Stomach (tissue), 19 donors: ENCODE measurements at regions of chr7 and their contacts with region 1.

Region 1: DNA sequence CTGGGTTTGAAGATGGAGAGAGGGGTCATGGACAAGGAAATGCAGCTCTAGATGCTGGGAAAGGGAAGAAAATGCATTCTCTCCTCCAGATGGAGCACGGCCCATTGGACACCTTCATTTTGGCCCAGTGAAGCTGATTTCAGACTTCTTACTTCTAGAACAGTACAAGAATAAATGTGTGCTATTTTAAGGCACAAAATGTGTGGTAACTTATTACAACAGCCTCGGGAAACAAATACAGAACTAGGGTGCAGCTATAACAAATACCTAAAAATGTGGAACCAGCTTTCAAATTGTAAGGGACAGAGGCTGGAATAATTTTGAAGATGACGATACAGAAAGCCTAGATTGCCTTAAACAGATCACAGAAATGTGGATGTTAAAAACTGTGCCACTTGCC is 54.1 kb downstream of the CYTH3 start:
- DNase-seq: no peak
- H3K4me3 ChIP-seq: no peak overlapping the region
- H3K27ac ChIP-seq: no peak overlapping the region
- H3K4me1 ChIP-seq: peaks cover 0 to 31% (median 3%) of the 10 kb centered on the region in 4 donors
- H3K27me3 ChIP-seq: no peaks in the 10 kb centered on the region
- CTCF ChIP-seq: no peak
- EP300 ChIP-seq: no peak
- POLR2A ChIP-seq: no peak

Region 2: GRCh38 chr7:6260291-6261187 is 42.2 kb after region 1 on chr7:
- intact Hi-C with region 1: loop called (anchors 10 kb)
- DNase-seq: no peak
- H3K4me3 ChIP-seq: no peak overlapping the region
- H3K27ac ChIP-seq: peak overlapping the region; percentile 19 to 63 (median 54)
- H3K4me1 ChIP-seq: peaks cover 44 to 97% (median 75%) of the 10 kb centered on the region in 4 donors
- H3K27me3 ChIP-seq: no peaks in the 10 kb centered on the region
- CTCF ChIP-seq: no peak
- EP300 ChIP-seq: no peak
- POLR2A ChIP-seq: no peak

Region 3: DNA sequence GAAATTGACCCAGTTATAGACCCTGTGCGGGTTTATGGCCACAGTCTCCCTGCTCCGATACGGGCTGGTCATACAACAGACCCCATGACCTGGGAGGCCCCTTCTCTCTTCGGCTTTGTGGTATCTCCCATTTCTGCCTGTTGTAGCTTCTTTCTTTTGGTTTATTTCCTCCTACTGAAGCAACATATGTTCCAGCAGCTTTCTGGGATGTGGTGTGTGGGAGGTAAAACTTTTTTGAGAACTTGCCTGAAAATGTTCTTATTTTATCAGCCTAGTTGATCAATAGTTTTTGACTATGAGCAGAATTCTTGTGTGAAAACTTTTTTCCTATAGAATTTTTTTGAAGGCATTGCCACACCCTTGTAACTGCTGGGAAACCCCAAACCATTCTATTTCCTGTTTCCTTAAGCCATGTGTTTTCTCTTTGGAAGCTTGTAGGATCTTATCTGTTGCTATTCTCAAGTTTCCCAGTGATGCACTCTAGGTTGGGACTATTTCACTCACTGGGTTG is 149.4 kb after region 1 on chr7:
- intact Hi-C with region 1: no loop called
- DNase-seq: peak in 1 of 2 donors; percentile 62
- H3K4me3 ChIP-seq: no peak overlapping the region
- H3K27ac ChIP-seq: peak overlapping the region in 3 of 5 donors; percentile 30 to 48 (median 33)
- H3K4me1 ChIP-seq: peaks cover 0 to 13% (median 2%) of the 10 kb centered on the region in 4 donors
- H3K27me3 ChIP-seq: no peaks in the 10 kb centered on the region
- CTCF ChIP-seq: no peak
- EP300 ChIP-seq: no peak
- POLR2A ChIP-seq: no peak